Testis (tissue), 5 donors: ENCODE measurements at regions of chr2 and their contacts with region 1.

Region 1: GRCh38 chr2:105235388-105236054 is 6.0 kb upstream of the GPR45 start:
- DNase-seq: peak; percentile 90
- H3K4me3 ChIP-seq: no peak overlapping the region
- H3K27ac ChIP-seq: no peak overlapping the region
- H3K4me1 ChIP-seq: no peaks in the 10 kb centered on the region
- H3K27me3 ChIP-seq: no peaks in the 10 kb centered on the region
- CTCF ChIP-seq: peak; percentile 36 to 55 (median 38)
- POLR2A ChIP-seq: no peak

Region 2: DNA sequence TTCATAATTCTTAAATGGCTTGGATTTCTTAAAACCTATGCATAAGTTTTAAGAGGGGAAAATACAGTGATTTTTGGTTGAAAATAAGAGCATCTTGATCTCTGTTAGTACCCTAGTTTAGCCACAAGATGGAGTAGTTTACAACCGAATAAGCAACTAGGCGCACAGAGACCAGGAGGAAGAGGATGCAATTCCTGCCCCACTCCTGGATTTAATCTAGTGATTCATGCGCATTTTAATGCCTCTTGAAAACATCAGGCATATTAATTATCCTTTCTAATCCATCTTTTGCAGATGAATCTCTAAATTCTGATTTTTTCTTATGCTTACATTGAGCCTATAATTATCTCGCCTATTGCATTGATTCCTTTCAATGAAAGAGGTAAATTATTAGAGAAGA is 121.0 kb before region 1 on chr2:
- intact Hi-C with region 1: loop called (anchors 5 kb)
- DNase-seq: no peak
- H3K4me3 ChIP-seq: no peak overlapping the region
- H3K27ac ChIP-seq: no peak overlapping the region
- H3K4me1 ChIP-seq: no peaks in the 10 kb centered on the region
- H3K27me3 ChIP-seq: no peaks in the 10 kb centered on the region
- CTCF ChIP-seq: peak; percentile 7 to 69 (median 67)
- POLR2A ChIP-seq: no peak